ENCODE measurements at regions of chr14 and their contacts with region 1.

Region 1: GRCh38 chr14:61750708-61751474 is 11.3 kb upstream of the SNAPC1 start:
- DNase-seq: peak; percentile 83 to 91 (median 88)
- ATAC-seq: peak; percentile 99
- H3K4me3 ChIP-seq: peak overlapping the region; percentile 34 to 46
- H3K27ac ChIP-seq: peak overlapping the region in 3 of 4 donors; percentile 68 to 85 (median 75)
- H3K4me1 ChIP-seq: peaks cover 10% of the 10 kb centered on the region
- H3K27me3 ChIP-seq: no peaks in the 10 kb centered on the region
- CTCF ChIP-seq: no peak
- POLR2A ChIP-seq: peak; percentile 39 to 70 (median 70)

Region 2: DNA sequence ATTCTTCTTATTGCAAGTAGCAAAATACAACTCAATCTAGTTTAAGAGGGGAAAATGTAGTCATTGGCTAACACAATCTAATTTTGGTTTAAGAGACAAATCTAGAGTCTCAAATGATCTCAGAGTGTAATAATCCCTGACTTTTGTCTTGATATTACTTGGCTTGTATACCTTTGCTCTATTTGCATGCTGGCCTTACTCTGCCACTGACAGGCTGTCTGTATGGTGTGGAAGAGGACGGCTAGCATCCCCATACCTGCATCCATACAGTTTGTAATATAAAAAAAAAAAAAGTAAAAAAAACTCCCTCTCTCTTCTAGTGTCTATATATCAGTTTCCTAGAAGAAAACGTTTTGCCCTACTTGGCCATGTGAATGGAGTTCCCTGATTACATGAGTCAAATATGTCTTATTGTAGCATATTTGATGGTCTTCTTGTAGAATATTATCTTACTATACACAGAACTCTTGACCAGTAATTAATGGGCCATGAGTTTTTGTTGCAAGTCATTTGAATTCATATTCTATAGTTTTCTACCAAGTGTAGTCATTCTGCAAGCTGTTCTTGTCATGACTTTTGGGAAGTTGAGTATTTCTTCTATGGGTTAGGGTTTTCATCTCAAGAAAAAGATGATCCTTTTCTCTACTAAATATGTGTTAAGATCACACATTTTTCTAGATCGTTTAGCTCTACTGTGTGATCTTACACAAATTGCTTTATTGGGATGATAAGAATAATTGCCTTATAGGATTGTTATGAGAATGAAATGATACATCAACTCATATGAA is 47.4 kb before region 1 on chr14:
- intact Hi-C with region 1: loop called (anchors 10 kb)
- DNase-seq: no peak
- ATAC-seq: no peak
- H3K4me3 ChIP-seq: no peak overlapping the region
- H3K27ac ChIP-seq: no peak overlapping the region
- H3K4me1 ChIP-seq: peaks cover 43% of the 10 kb centered on the region
- H3K27me3 ChIP-seq: no peaks in the 10 kb centered on the region
- CTCF ChIP-seq: no peak
- POLR2A ChIP-seq: no peak

Region 3: GRCh38 chr14:61911574-61911973 is 160.7 kb after region 1 on chr14:
- intact Hi-C with region 1: no loop called
- DNase-seq: peak in 2 of 4 donors; percentile 27 to 44
- ATAC-seq: no peak
- H3K4me3 ChIP-seq: no peak overlapping the region
- H3K27ac ChIP-seq: no peak overlapping the region
- H3K4me1 ChIP-seq: no peaks in the 10 kb centered on the region
- H3K27me3 ChIP-seq: no peaks in the 10 kb centered on the region
- CTCF ChIP-seq: no peak
- POLR2A ChIP-seq: no peak